HepG2 (cell line): ENCODE measurements at regions of chr6 and their contacts with region 1.

Region 1: DNA sequence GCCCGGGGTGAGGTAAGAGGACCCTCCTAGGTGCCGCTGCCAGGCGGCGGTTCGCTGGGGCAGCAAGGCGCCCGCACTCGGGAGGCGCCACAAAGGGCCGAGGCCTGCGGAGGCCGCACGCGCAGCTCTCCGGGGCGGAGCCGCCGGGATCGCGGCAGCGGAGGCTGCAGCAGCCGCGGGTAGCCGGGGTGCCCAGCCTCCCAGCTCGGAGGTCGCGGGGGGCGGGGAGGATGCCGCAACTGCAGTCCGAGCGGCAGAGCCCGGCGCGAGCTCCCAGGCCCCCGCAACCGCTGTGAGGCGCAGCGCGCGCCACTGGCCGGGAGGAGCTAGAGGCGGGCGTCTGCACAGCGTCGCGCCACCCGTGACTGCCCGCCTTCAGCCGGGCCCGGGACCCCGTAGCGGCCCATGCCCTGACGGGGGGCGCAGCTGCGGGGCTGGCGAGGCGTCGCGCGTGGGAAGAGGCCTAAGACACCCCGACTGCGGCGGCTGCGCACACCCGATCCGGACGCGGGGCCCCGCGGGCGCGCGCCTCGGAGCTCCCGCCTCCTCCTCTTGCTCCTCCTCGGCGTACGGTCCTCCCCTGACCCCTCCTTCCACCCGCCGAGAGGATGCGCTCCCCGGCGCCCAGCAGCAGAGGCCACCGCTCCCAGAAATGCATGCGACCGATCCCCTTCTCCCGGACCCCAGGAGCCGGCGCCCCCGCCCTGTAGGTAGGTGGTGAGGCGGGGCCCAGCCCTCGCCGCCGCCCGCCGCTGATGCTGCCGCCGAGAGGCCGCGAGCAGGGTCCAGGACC is at the start of gene NCOA7:
- DNase-seq: peak; percentile 65
- ATAC-seq: peak; percentile 89
- H3K4me3 ChIP-seq: peak within 1 kb of the TSS; percentile 90 to 97 (median 94)
- H3K27ac ChIP-seq: peak within 1 kb of the TSS; percentile 88
- H3K4me1 ChIP-seq: peaks cover 42% of the 10 kb centered on the region
- H3K27me3 ChIP-seq: no peaks in the 10 kb centered on the region; a peak in 2 of 5 replicates
- CTCF ChIP-seq: peak; percentile 13
- EP300 ChIP-seq: no peak
- POLR2A ChIP-seq: peak; percentile 78 to 81
- RAD21 ChIP-seq: peak; percentile 79
- total RNA-seq, gene NCOA7: 13.6 and 24.3 TPM in 2 replicates

Region 2: DNA sequence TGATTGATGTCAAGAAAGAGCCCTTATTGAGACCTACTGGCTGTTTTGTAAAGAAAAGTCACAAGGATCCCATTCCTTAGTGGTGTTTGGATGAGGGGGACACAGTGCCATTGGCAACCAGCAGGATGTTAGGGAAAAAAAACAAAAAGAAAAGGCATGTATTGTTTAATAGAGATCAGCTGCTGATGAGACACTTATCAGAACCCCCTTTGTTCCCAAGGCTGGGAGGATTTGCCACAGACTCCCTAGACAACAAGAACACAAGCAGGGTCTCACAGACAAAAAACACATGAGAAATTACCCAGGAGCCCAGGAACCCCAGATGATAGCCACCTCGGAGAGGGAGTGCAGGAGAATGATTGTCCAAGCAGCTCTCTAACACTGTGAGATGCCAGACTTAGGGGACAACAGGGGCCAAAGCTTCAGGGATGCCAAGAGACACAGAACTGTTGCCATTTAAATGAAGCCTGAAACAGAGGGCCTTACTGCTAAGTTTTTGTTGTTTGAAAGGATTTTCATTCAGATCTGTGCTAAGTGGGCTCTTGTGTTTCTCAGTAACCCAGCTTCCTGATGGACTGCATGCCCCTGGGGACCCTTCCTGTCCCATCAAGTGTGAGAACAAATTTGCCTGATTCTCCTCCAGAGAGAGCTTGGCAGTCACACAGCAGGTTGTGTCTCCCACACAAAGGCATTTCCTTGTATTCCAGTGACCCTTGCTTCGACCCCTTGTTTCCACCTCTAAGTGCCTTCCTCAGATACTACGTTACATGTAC is 89.8 kb before region 1 on chr6:
- CTCF ChIA-PET with region 1: no interaction called
- POLR2A ChIA-PET with region 1: no interaction called
- in situ Hi-C with region 1: no loop called
- intact Hi-C with region 1: no loop called
- DNase-seq: no peak
- ATAC-seq: no peak
- H3K4me3 ChIP-seq: no peak overlapping the region
- H3K27ac ChIP-seq: no peak overlapping the region
- H3K4me1 ChIP-seq: no peaks in the 10 kb centered on the region
- H3K27me3 ChIP-seq: peaks cover 0 to 8% of the 10 kb centered on the region in 2 experiments; a peak in 2 of 5 replicates
- CTCF ChIP-seq: no peak
- EP300 ChIP-seq: no peak
- POLR2A ChIP-seq: no peak
- RAD21 ChIP-seq: no peak

Region 3: DNA sequence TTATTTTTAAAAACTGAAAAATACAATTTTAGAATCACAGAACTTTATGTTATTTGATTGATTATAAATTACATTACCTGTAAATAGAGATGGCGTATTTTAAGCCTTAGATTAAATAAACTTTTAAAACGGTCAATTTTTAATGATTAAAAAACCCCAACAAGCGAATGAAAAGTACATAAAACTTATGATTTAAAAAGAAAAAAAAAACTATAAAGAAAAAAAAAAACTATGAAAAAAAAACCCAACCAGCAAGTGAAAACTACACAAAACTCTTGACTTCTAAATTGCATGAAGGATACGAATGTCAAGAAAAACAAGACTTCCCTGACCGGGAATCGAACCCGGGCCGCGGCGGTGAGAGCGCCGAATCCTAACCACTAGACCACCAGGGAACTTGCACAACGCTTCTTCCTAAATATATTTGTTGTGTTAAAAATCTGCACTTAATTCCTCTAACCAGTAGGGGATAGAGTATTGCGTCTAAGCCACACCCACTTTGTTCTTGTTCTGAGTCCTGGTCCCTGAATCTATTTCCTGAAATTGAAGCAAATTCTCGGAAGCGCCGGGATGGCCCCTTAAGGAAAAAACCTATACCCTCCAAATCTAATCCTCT is 10.5 kb before region 1 on chr6:
- CTCF ChIA-PET with region 1: no interaction called
- POLR2A ChIA-PET with region 1: interaction called, 107 read pairs
- in situ Hi-C with region 1: no loop called
- intact Hi-C with region 1: loop called (anchors 1 kb)
- DNase-seq: peak; percentile 96
- ATAC-seq: peak; percentile 91
- H3K4me3 ChIP-seq: peak overlapping the region; percentile 60 to 85 (median 81)
- H3K27ac ChIP-seq: peak overlapping the region; percentile 83
- H3K4me1 ChIP-seq: peaks cover 30% of the 10 kb centered on the region
- H3K27me3 ChIP-seq: no peaks in the 10 kb centered on the region; a peak in 1 of 5 replicates
- CTCF ChIP-seq: no peak; the same call in 1 of the 2 replicates
- EP300 ChIP-seq: no peak; a peak in 1 of 4 replicates
- POLR2A ChIP-seq: no peak
- RAD21 ChIP-seq: no peak

Region 4: GRCh38 chr6:125846292-125847024 is 55.9 kb after region 1 on chr6:
- CTCF ChIA-PET with region 1: no interaction called
- POLR2A ChIA-PET with region 1: interaction called, 3 read pairs
- in situ Hi-C with region 1: no loop called
- intact Hi-C with region 1: loop called (anchors 2 kb)
- DNase-seq: peak; percentile 20
- ATAC-seq: peak; percentile 53; the same call in 2 of the 3 replicates
- H3K4me3 ChIP-seq: no peak overlapping the region
- H3K27ac ChIP-seq: peak overlapping the region; percentile 2
- H3K4me1 ChIP-seq: peaks cover 21% of the 10 kb centered on the region
- H3K27me3 ChIP-seq: no peaks in the 10 kb centered on the region
- CTCF ChIP-seq: no peak
- EP300 ChIP-seq: no peak
- POLR2A ChIP-seq: no peak
- RAD21 ChIP-seq: no peak

Region 5: DNA sequence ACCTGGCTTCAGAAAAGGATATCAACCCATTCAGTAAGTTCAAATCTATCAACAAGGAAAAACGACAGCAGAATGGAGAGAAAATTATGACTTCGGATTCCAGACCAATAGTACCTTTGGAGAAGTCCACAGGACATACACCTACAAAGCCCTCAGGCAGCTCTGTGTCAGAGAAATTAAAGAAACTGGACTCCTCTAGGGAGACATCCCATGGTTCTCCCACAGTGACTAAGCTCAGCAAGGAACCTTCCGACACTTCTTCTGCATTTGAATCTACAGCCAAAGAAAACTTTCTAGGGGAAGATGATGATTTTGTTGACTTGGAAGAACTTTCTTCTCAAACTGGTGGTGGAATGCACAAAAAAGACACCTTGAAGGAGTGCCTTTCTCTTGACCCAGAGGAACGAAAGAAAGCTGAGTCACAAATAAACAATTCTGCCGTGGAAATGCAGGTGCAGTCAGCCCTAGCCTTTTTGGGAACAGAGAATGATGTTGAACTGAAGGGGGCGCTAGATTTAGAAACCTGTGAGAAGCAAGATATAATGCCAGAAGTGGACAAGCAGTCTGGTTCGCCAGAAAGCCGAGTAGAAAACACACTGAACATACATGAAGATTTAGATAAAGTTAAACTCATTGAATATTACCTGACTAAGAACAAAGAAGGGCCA is 98.6 kb after region 1 on chr6:
- CTCF ChIA-PET with region 1: no interaction called
- POLR2A ChIA-PET with region 1: no interaction called
- in situ Hi-C with region 1: no loop called
- intact Hi-C with region 1: loop called (anchors 5 kb)
- DNase-seq: peak; percentile 64
- ATAC-seq: peak; percentile 79
- H3K4me3 ChIP-seq: no peak overlapping the region
- H3K27ac ChIP-seq: no peak overlapping the region
- H3K4me1 ChIP-seq: peaks cover 7% of the 10 kb centered on the region
- H3K27me3 ChIP-seq: no peaks in the 10 kb centered on the region
- CTCF ChIP-seq: peak; percentile 62
- EP300 ChIP-seq: no peak
- POLR2A ChIP-seq: no peak
- RAD21 ChIP-seq: peak; percentile 66; the same call in 1 of the 2 replicates

Region 6: DNA sequence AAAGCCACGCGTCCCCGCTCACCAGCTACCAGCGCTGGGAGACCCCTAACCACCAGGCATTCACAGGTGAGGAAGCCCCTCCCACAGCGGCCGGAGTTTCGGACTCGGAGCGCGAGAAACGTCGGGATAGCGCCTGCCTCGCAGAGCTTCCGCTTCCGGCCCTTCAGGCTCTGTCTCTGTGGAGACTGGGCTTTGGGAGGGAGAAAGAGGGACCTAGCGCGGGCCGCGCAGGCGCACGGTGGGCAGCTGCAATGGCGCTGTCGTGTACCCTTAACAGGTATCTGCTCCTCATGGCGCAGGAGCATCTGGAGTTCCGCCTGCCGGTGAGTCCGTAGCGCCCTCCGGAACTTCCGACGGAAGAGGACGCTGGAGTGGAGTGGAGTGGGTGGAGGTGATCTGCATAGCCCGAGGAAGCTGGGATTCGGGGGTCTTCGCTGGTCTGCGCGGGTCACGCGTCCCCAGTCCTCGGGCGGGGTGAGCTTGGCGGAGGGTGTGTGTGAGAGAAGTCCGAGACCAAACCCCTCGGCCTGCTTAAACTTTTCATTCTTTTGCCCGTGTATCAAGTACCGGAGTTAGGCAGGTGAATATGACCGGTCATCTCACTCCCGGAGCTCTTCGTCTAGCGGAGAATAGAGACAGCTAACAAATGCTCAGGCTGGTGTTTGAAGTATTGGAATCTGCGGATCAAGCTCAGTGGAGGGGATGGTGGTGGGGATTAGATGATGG is 195.9 kb after region 1 on chr6 and contains the start of gene TRMT11:
- CTCF ChIA-PET with region 1: no interaction called
- POLR2A ChIA-PET with region 1: interaction called, 30 read pairs
- in situ Hi-C with region 1: no loop called
- intact Hi-C with region 1: loop called (anchors 1 kb)
- DNase-seq: peak; percentile 97
- ATAC-seq: peak; percentile 98
- H3K4me3 ChIP-seq: peak within 1 kb of the TSS; percentile 80 to 95 (median 84)
- H3K27ac ChIP-seq: peak within 1 kb of the TSS; percentile 87
- H3K4me1 ChIP-seq: peaks cover 62% of the 10 kb centered on the region
- H3K27me3 ChIP-seq: no peaks in the 10 kb centered on the region; a peak in 1 of 5 replicates
- CTCF ChIP-seq: peak; percentile 46
- EP300 ChIP-seq: peak in 1 of 2 experiments; percentile 6; a peak in 3 of 4 replicates
- POLR2A ChIP-seq: peak; percentile 96 to 98
- RAD21 ChIP-seq: peak; percentile 47
- total RNA-seq, gene TRMT11: 66.0 and 81.9 TPM in 2 replicates

Region 7: GRCh38 chr6:126481319-126481718 is 690.8 kb after region 1 on chr6:
- CTCF ChIA-PET with region 1: no interaction called
- POLR2A ChIA-PET with region 1: no interaction called
- in situ Hi-C with region 1: no loop called
- intact Hi-C with region 1: no loop called
- DNase-seq: no peak
- ATAC-seq: no peak
- H3K4me3 ChIP-seq: no peak overlapping the region
- H3K27ac ChIP-seq: no peak overlapping the region
- H3K4me1 ChIP-seq: no peaks in the 10 kb centered on the region
- H3K27me3 ChIP-seq: no peaks in the 10 kb centered on the region
- CTCF ChIP-seq: no peak
- EP300 ChIP-seq: no peak
- POLR2A ChIP-seq: no peak
- RAD21 ChIP-seq: no peak